ENCODE measurements at regions of chr20 and their contacts with region 1.

Region 1: GRCh38 chr20:15654208-15654645 is 919.0 kb downstream of the KIF16B start:
- DNase-seq: peak; percentile 63
- H3K4me3 ChIP-seq: no peak overlapping the region
- H3K27ac ChIP-seq: no peak overlapping the region
- H3K4me1 ChIP-seq: no peaks in the 10 kb centered on the region
- H3K27me3 ChIP-seq: no peaks in the 10 kb centered on the region
- CTCF ChIP-seq: peak; percentile 54 to 64
- POLR2A ChIP-seq: no peak

Region 2: GRCh38 chr20:15618912-15619311 is 35.3 kb before region 1 on chr20:
- CTCF ChIA-PET with region 1: no interaction called
- POLR2A ChIA-PET with region 1: no interaction called
- dilution Hi-C with region 1: no loop called
- intact Hi-C with region 1: no loop called
- DNase-seq: no peak
- H3K4me3 ChIP-seq: no peak overlapping the region
- H3K27ac ChIP-seq: no peak overlapping the region
- H3K4me1 ChIP-seq: no peaks in the 10 kb centered on the region
- H3K27me3 ChIP-seq: no peaks in the 10 kb centered on the region
- CTCF ChIP-seq: no peak
- POLR2A ChIP-seq: no peak

Region 3: GRCh38 chr20:15637950-15638349 is 16.3 kb before region 1 on chr20:
- CTCF ChIA-PET with region 1: interaction called, 12 read pairs
- POLR2A ChIA-PET with region 1: no interaction called
- dilution Hi-C with region 1: no loop called
- intact Hi-C with region 1: no loop called
- DNase-seq: peak; percentile 71
- H3K4me3 ChIP-seq: no peak overlapping the region
- H3K27ac ChIP-seq: no peak overlapping the region
- H3K4me1 ChIP-seq: peaks cover 2% of the 10 kb centered on the region
- H3K27me3 ChIP-seq: peaks cover 0 to 2% of the 10 kb centered on the region in 2 experiments
- CTCF ChIP-seq: no peak
- POLR2A ChIP-seq: no peak

Region 4: GRCh38 chr20:15643714-15644113 is 10.5 kb before region 1 on chr20:
- CTCF ChIA-PET with region 1: interaction called, 23 read pairs
- POLR2A ChIA-PET with region 1: no interaction called
- dilution Hi-C with region 1: no loop called
- intact Hi-C with region 1: no loop called
- DNase-seq: peak; percentile 15
- H3K4me3 ChIP-seq: no peak overlapping the region
- H3K27ac ChIP-seq: no peak overlapping the region
- H3K4me1 ChIP-seq: peaks cover 5% of the 10 kb centered on the region
- H3K27me3 ChIP-seq: peaks cover 0 to 2% of the 10 kb centered on the region in 2 experiments
- CTCF ChIP-seq: peak; percentile 22 to 39
- POLR2A ChIP-seq: no peak

Region 5: GRCh38 chr20:15673206-15673605 is 19.0 kb after region 1 on chr20:
- CTCF ChIA-PET with region 1: interaction called, 23 read pairs
- POLR2A ChIA-PET with region 1: no interaction called
- dilution Hi-C with region 1: no loop called
- intact Hi-C with region 1: no loop called
- DNase-seq: peak; percentile 76
- H3K4me3 ChIP-seq: no peak overlapping the region
- H3K27ac ChIP-seq: peak overlapping the region; percentile 51
- H3K4me1 ChIP-seq: peaks cover 13% of the 10 kb centered on the region
- H3K27me3 ChIP-seq: no peaks in the 10 kb centered on the region
- CTCF ChIP-seq: no peak
- POLR2A ChIP-seq: no peak

Region 6: GRCh38 chr20:15682690-15683089 is 28.5 kb after region 1 on chr20:
- CTCF ChIA-PET with region 1: interaction called, 11 read pairs
- POLR2A ChIA-PET with region 1: no interaction called
- dilution Hi-C with region 1: no loop called
- intact Hi-C with region 1: no loop called
- DNase-seq: peak; percentile 45
- H3K4me3 ChIP-seq: no peak overlapping the region
- H3K27ac ChIP-seq: no peak overlapping the region
- H3K4me1 ChIP-seq: peaks cover 8% of the 10 kb centered on the region
- H3K27me3 ChIP-seq: no peaks in the 10 kb centered on the region
- CTCF ChIP-seq: no peak
- POLR2A ChIP-seq: no peak

Region 7: GRCh38 chr20:15759594-15759993 is 105.4 kb after region 1 on chr20:
- CTCF ChIA-PET with region 1: interaction called, 3 read pairs
- POLR2A ChIA-PET with region 1: no interaction called
- dilution Hi-C with region 1: no loop called
- intact Hi-C with region 1: loop called (anchors 5 kb)
- DNase-seq: peak; percentile 21
- H3K4me3 ChIP-seq: no peak overlapping the region
- H3K27ac ChIP-seq: no peak overlapping the region
- H3K4me1 ChIP-seq: no peaks in the 10 kb centered on the region
- H3K27me3 ChIP-seq: no peaks in the 10 kb centered on the region
- CTCF ChIP-seq: peak in 1 of 2 donors; percentile 2
- POLR2A ChIP-seq: no peak

Region 8: DNA sequence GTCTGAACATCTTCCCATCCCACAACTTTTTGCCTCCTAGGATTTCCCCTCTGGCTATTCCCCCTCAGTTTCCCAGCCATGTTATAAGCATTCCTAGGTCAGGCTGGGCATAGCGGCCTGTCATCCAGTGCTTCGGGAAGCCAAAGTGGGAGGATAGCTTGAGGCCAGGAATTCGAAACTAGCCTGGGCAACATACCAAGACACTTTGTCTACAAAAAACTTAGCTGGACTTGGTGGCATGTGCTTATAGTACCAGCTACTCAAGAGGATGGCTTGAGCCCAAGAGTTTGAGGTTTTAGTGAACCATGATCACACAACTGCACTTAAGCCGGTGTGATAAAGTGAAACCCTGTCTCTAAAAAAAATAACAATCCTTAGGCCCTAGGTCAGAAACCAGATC is 471.6 kb after region 1 on chr20:
- CTCF ChIA-PET with region 1: no interaction called
- POLR2A ChIA-PET with region 1: no interaction called
- dilution Hi-C with region 1: no loop called
- intact Hi-C with region 1: no loop called
- DNase-seq: no peak
- H3K4me3 ChIP-seq: no peak overlapping the region
- H3K27ac ChIP-seq: no peak overlapping the region
- H3K4me1 ChIP-seq: no peaks in the 10 kb centered on the region
- H3K27me3 ChIP-seq: no peaks in the 10 kb centered on the region
- CTCF ChIP-seq: no peak
- POLR2A ChIP-seq: no peak

Measured in endothelial cell of umbilical vein (primary cell).